ENCODE measurements at regions of chr2 and their contacts with region 1.

Region 1: GRCh38 chr2:200578778-200579177 is 7.0 kb upstream of the AOX1 start:
- DNase-seq: no peak
- H3K4me3 Mint-ChIP-seq: no peak overlapping the region
- H3K27ac Mint-ChIP-seq: no peak overlapping the region
- H3K4me1 Mint-ChIP-seq: peaks cover 18% of the 10 kb centered on the region
- H3K27me3 Mint-ChIP-seq: no peaks in the 10 kb centered on the region

Region 2: GRCh38 chr2:200735061-200735460 is 156.3 kb after region 1 on chr2:
- intact Hi-C with region 1: loop called (anchors 1 kb)
- DNase-seq: no peak
- H3K4me3 Mint-ChIP-seq: no peak overlapping the region
- H3K27ac Mint-ChIP-seq: no peak overlapping the region
- H3K4me1 Mint-ChIP-seq: peaks cover 15% of the 10 kb centered on the region
- H3K27me3 Mint-ChIP-seq: peaks cover 2% of the 10 kb centered on the region

Region 3: GRCh38 chr2:201176081-201176481 is 597.3 kb after region 1 on chr2:
- intact Hi-C with region 1: loop called (anchors 5 kb)
- DNase-seq: no peak
- H3K4me3 Mint-ChIP-seq: no peak overlapping the region
- H3K27ac Mint-ChIP-seq: no peak overlapping the region
- H3K4me1 Mint-ChIP-seq: peaks cover 17% of the 10 kb centered on the region
- H3K27me3 Mint-ChIP-seq: no peaks in the 10 kb centered on the region